ENCODE measurements at regions of chr7 and their contacts with region 1.

Region 1: GRCh38 chr7:31744294-31744874 is 57.4 kb downstream of the PPP1R17 start:
- DNase-seq: peak in 4 of 5 donors; percentile 67 to 85 (median 76)
- H3K4me3 ChIP-seq: no peak overlapping the region
- H3K27ac ChIP-seq: no peak overlapping the region
- H3K4me1 ChIP-seq: no peaks in the 10 kb centered on the region
- H3K27me3 ChIP-seq: no peaks in the 10 kb centered on the region
- CTCF ChIP-seq: peak; percentile 85

Region 2: DNA sequence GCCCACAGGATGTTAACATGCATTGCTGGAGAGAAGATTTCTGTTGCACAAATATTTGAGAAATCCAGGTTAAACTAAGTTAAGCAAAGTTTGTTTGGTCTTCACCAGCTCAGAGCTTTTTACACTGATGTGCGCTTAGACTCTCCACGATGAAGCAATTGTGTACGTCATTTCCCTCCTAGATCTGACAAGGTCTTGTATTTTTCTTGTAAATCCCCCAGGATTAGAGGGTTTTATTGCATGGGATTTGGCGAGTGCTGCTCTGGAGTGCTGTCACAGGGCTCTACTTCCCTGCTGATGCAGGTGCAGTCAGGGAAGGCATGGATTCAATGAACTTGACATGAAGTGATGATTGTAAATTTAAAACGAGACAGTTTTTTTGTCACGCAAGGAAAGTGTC is 152.5 kb after region 1 on chr7:
- intact Hi-C with region 1: no loop called
- DNase-seq: peak in 1 of 5 donors; percentile 7
- H3K4me3 ChIP-seq: no peak overlapping the region
- H3K27ac ChIP-seq: no peak overlapping the region
- H3K4me1 ChIP-seq: no peaks in the 10 kb centered on the region
- H3K27me3 ChIP-seq: no peaks in the 10 kb centered on the region
- CTCF ChIP-seq: no peak

Region 3: DNA sequence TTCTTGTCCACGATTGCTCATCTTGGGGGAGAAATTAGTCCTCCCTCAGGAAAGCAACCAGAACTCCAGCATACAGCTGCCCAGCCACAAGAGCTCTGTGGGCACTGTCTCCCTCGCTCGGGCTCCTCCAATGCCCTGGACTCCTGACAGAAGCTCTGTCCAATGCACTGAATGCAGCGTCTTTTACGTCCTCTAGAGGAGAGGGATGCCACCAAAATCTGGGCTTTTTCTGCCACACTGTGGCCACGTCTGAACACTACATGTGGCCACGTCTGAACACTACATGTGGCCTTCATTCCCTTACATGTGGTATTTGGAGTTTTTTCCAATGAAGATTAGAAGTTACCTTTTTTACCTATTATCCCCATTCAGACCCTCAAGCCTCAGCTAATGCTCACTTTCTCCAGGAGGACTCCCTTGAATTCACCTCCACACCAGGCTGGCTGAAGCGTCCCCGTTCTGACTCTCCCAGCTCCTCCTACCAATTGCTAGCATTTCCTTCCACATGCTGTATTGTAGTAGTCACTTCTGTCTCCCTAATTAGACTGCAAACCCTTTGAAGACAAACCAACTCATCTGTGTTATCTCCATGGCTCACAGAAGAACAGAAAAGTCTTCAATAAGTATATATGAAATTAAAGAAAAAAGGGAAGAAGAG is 460.1 kb after region 1 on chr7:
- intact Hi-C with region 1: loop called (anchors 5 kb)
- DNase-seq: peak in 4 of 5 donors; percentile 76 to 87 (median 78)
- H3K4me3 ChIP-seq: peak overlapping the region in 2 of 3 donors; percentile 12 to 48
- H3K27ac ChIP-seq: no peak overlapping the region
- H3K4me1 ChIP-seq: no peaks in the 10 kb centered on the region
- H3K27me3 ChIP-seq: peaks cover 3% of the 10 kb centered on the region
- CTCF ChIP-seq: peak; percentile 66

Region 4: DNA sequence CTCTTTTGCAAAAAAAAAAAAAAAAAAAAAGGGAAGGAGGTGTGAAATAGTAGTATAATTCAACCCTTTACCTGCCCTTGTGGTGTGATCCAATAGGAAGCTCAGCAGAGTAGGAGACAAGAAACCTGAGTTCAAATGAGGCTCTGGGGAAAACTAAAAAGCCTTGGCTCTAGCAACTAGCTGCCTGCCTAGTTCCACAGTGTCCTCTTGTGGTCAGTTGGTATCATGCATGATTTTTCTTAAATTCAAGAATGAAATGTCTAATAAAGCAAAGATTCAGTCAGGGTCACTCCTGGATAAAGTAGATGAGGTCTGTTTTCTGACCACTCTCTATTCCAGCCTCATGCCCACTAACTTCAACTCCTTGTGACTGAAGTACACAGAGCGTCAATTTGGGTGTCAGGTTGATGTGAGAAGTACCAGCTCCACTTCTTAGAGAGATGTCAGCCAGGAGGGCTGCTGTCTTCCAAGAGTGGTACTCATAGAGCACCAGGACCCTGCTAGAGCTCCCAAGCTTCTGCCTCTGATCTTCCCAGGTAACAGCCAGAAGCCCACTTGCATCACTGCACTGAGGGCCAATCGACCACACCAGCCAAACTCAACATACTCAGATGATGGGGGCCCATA is 735.3 kb after region 1 on chr7:
- intact Hi-C with region 1: loop called (anchors 10 kb)
- DNase-seq: peak in 2 of 5 donors; percentile 28 to 59
- H3K4me3 ChIP-seq: no peak overlapping the region
- H3K27ac ChIP-seq: no peak overlapping the region
- H3K4me1 ChIP-seq: no peaks in the 10 kb centered on the region
- H3K27me3 ChIP-seq: no peaks in the 10 kb centered on the region
- CTCF ChIP-seq: peak; percentile 63

Measured in kidney (tissue), 22 donors.